ENCODE measurements at regions of chr3 and their contacts with region 1.

Region 1: GRCh38 chr3:42880601-42881451 is 5.1 kb upstream of the CYP8B1 start:
- DNase-seq: peak; percentile 76
- ATAC-seq: peak; percentile 99
- H3K4me3 Mint-ChIP-seq: peak overlapping the region; percentile 80
- H3K27ac Mint-ChIP-seq: peak overlapping the region; percentile 36
- H3K4me1 Mint-ChIP-seq: peaks cover 10% of the 10 kb centered on the region
- H3K27me3 Mint-ChIP-seq: no peaks in the 10 kb centered on the region
- CTCF ChIP-seq: peak; percentile 81

Region 2: GRCh38 chr3:42749753-42750231 is 131.0 kb before region 1 on chr3:
- CTCF ChIA-PET with region 1: interaction called, 5 read pairs
- POLR2A ChIA-PET with region 1: no interaction called
- intact Hi-C with region 1: loop called (anchors 1 kb)
- DNase-seq: no peak
- ATAC-seq: no peak
- H3K4me3 Mint-ChIP-seq: no peak overlapping the region
- H3K27ac Mint-ChIP-seq: no peak overlapping the region
- H3K4me1 Mint-ChIP-seq: peaks cover 5% of the 10 kb centered on the region
- H3K27me3 Mint-ChIP-seq: no peaks in the 10 kb centered on the region
- CTCF ChIP-seq: no peak

Region 3: DNA sequence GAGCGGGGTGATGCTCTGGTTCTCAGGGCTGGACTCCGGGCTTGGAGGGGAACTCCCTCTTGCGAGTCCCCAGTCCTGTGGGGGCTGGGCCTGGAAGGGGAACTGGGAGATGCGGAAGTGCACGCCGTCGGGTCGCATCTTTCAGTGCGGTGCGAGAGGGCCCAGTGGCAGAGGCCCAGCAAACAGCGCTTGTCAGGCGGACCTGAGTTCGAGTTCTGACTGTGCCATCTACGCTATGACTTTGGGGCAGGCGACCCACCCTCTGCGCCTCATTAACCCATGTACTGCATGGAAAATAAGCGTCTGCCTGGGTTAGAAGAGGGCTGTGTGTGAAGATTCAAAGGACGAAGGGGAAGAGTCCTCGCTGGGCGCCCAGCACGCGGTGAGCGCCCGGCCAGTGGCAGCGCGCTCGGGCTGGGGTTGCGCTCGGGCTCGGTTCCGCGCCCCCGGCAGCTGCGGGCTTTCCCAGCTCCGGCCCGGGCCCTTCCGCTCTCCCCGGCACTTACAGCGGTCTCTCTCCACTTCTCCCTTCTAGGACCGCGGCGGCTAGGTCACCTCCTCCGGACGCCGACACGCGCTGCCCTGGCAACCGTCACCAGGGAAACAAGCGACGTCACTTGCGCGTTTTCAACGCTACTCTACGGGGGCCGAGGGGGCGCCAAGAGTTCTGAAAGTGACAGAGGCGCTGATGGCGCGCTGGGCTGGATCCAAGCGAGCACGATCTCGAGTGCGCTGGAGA is 108.0 kb before region 1 on chr3 and contains the start of gene CCDC13:
- CTCF ChIA-PET with region 1: interaction called, 3 read pairs
- POLR2A ChIA-PET with region 1: no interaction called
- intact Hi-C with region 1: loop called (anchors 2 kb)
- DNase-seq: peak; percentile 97
- ATAC-seq: peak; percentile 90
- H3K4me3 Mint-ChIP-seq: peak within 1 kb of the TSS; percentile 90
- H3K27ac Mint-ChIP-seq: peak within 1 kb of the TSS; percentile 89
- H3K4me1 Mint-ChIP-seq: peaks cover 13% of the 10 kb centered on the region
- H3K27me3 Mint-ChIP-seq: no peaks in the 10 kb centered on the region
- CTCF ChIP-seq: no peak
- total RNA-seq, gene CCDC13: 1.7 and 1.9 TPM in 2 replicates

Region 4: DNA sequence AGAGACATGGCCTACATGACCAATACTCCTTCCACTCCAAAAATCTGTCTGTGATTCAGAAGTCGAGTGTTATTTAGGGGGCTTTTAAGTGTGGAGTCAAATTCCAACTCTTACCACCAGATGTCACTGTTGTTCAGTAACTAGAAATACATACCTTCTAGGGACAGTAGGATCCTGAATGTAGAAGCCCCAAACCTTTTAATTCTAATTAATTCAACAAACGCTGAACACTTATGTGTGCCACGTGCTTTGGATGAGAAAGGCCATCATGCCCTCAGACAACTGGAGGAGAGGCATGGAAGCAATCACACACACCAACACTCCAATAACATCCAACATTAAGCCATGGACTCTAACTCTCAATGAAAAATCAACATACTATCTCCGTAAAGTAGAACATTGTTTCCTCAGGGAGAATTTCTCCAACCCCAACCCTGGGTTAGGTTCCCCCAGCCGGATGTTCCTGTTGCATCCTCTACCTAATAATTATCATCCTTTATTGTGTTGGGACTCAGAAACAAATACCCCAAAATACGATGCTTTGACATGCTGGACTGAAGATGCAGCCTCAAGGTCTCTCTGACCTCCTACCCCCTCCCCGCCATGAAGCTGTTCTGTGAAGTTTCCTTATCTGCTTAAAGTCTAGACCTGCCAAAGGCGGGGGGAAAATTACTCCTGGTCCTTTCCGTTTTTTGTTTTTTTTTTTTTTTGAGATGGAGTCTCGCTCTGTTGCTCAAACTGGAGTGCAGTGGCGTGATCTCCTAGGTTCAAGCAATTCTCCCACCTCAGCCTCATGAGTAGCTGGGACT is 99.7 kb before region 1 on chr3:
- CTCF ChIA-PET with region 1: interaction called, 31 read pairs
- POLR2A ChIA-PET with region 1: interaction called, 8 read pairs
- intact Hi-C with region 1: loop called (anchors 1 kb)
- DNase-seq: no peak
- ATAC-seq: peak; percentile 79
- H3K4me3 Mint-ChIP-seq: no peak overlapping the region
- H3K27ac Mint-ChIP-seq: no peak overlapping the region
- H3K4me1 Mint-ChIP-seq: peaks cover 2% of the 10 kb centered on the region
- H3K27me3 Mint-ChIP-seq: no peaks in the 10 kb centered on the region
- CTCF ChIP-seq: peak; percentile 63

Region 5: DNA sequence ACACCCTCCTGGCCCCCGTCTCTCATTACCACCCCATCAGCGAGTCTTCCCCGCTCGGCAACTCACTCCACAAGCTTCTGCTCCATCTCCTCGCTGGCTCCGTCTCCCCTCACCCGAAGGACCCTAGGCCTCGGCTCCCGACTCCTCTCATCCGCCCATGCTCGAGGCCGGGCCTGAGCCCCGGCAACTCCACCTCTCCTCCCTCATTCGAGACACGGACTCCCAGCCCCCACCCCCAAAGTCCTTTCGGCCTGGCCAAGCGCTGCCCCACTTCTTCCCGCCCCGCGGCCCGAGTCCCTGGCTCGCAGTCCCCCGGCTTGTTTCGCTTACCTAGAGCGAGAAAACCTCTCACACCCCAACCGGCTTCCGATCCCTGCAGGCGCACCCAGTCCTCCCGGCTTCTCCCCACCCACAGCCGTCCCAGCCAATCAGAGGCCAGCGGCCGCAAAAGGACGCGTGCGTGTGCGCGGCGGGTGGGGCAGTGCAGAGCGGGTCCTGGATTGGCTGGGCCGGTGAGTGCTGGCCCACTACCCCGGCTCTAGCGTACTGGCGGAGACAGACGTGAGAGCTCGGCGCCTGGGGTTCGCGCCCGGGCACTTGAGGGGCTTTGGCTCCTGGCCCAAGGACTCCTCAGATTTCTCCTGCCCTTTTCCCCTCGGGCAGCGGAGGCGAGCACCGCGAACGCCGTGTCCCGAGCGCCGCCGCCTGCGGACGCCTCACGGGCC is 76.6 kb before region 1 on chr3 and contains the start of gene HIGD1A:
- CTCF ChIA-PET with region 1: interaction called, 6 read pairs
- POLR2A ChIA-PET with region 1: interaction called, 3 read pairs
- intact Hi-C with region 1: loop called (anchors 1 kb)
- DNase-seq: peak; percentile 83
- ATAC-seq: peak; percentile 99
- H3K4me3 Mint-ChIP-seq: peak within 1 kb of the TSS; percentile 97
- H3K27ac Mint-ChIP-seq: peak within 1 kb of the TSS; percentile 87
- H3K4me1 Mint-ChIP-seq: peaks cover 41% of the 10 kb centered on the region
- H3K27me3 Mint-ChIP-seq: peaks cover 6% of the 10 kb centered on the region
- CTCF ChIP-seq: no peak
- total RNA-seq, gene HIGD1A: 35.9 and 38.2 TPM in 2 replicates

Region 6: GRCh38 chr3:42831321-42831713 is 49.5 kb before region 1 on chr3:
- CTCF ChIA-PET with region 1: interaction called, 40 read pairs
- POLR2A ChIA-PET with region 1: interaction called, 5 read pairs
- intact Hi-C with region 1: loop called (anchors 1 kb)
- DNase-seq: peak; percentile 56
- ATAC-seq: peak; percentile 78
- H3K4me3 Mint-ChIP-seq: no peak overlapping the region
- H3K27ac Mint-ChIP-seq: no peak overlapping the region
- H3K4me1 Mint-ChIP-seq: peaks cover 4% of the 10 kb centered on the region
- H3K27me3 Mint-ChIP-seq: peaks cover 8% of the 10 kb centered on the region
- CTCF ChIP-seq: no peak

Region 7: DNA sequence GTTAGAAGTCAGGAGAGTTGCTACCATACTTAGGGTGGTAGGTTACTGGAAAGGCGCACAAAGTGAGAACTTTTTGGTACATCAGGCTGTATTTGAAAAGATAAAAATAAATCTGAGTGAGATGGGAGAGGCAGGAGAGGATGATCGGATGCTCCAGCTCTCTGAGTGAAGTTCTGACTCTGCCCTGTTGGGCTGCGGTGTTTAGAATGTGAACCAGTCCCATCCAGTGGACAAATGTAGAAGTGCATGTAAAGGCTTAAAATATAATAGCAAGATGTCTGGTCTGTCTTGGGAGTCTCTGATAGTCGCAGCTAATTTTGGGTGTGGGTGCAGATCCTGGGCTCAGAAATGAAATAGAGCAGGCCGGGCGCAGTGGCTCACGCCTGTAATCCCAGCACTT is 41.2 kb before region 1 on chr3:
- CTCF ChIA-PET with region 1: interaction called, 7 read pairs
- POLR2A ChIA-PET with region 1: no interaction called
- intact Hi-C with region 1: loop called (anchors 2 kb)
- DNase-seq: no peak
- ATAC-seq: peak; percentile 99
- H3K4me3 Mint-ChIP-seq: peak overlapping the region; percentile 63
- H3K27ac Mint-ChIP-seq: peak overlapping the region; percentile 60
- H3K4me1 Mint-ChIP-seq: peaks cover 14% of the 10 kb centered on the region
- H3K27me3 Mint-ChIP-seq: no peaks in the 10 kb centered on the region
- CTCF ChIP-seq: no peak

Region 8: GRCh38 chr3:43142472-43142871 is 261.6 kb after region 1 on chr3:
- CTCF ChIA-PET with region 1: no interaction called
- POLR2A ChIA-PET with region 1: no interaction called
- intact Hi-C with region 1: no loop called
- DNase-seq: no peak
- ATAC-seq: no peak
- H3K4me3 Mint-ChIP-seq: no peak overlapping the region
- H3K27ac Mint-ChIP-seq: no peak overlapping the region
- H3K4me1 Mint-ChIP-seq: no peaks in the 10 kb centered on the region
- H3K27me3 Mint-ChIP-seq: peaks cover 9% of the 10 kb centered on the region
- CTCF ChIP-seq: no peak

Measured in activated B cell treated with CpG ODN at 0.5 μM for 24 hours (primary cell).